Endothelial cell of umbilical vein (primary cell): ENCODE measurements at regions of chr1 and their contacts with region 1.

Region 1: DNA sequence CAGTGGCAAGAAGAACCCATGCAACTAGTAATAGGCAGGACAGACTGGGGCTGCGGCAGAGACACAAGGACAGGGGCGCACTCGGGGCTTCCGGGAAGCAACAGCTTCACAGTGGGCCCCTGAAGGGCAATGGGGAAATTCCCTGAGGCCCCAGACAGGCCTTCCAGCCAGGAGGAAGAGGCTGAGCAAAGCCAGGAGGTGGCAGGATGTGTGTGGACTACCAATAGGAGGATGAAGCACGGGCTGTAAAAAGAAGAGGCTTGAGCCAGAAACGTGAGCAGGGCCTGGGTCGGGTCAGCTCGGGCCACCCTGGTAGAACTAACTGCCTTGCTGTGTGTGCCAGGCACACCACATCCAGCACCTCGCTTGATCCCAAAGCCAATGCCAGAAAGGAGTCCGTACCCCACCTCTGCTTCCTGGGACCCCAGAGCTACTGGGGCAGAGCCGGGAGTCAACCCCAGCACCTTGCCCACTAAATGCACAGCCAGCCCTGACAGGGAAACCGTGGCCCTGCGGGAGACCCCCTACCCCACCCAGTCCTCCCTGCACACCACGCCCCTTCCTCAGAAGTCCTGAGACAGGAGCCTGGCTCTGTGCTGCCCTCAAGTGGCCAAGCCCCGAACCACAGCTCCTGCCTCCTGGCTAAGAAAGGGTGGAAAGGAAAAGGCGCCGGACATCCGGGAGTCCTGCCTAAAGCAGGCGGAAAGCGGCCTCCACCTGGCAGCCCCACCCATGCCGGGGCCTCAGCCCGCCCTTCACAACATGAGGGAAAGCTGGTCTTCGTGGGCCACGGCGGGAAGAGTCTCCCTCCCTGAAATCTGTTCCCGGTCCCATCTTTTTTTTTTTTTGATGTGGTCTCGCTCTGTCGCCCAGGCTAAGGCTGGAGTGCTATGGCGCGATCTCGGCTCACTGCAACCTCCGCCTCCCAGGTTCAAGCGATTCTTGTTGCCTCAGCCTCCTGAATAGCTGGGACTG is 33.7 kb downstream of the TTC39A start:
- DNase-seq: peak; percentile 80
- H3K4me3 ChIP-seq: peak overlapping the region in 2 of 3 experiments; percentile 2 to 34
- H3K27ac ChIP-seq: peak overlapping the region; percentile 39
- H3K4me1 ChIP-seq: peaks cover 9% of the 10 kb centered on the region
- H3K27me3 ChIP-seq: no peaks in the 10 kb centered on the region
- CTCF ChIP-seq: peak; percentile 93 to 96
- POLR2A ChIP-seq: peak; percentile 32

Region 2: DNA sequence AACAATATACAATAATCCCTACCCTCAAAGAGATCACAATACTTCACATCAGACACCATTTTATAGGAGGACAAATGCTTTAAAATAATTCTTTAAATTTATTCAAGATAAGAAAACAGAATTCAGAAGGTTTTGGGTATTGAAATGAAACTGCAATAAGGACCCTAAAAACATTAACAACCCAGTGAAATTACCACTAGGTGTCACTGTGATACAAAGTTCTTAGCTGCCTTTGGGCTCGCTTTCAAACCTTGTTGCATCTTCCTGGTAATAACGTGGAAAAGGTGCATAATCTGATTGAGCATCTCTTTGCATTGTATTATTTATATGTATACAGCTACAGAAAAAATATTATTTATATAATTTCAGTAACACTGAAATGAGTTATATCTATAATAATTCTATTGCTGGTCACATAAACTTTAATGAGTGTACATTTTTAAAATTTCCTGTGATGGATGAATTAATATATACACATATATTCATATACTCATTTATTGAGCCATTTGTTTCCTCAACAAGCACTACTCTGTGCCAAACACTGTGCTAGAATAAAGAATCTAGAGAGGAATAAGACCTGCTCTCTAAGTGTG is 521.8 kb before region 1 on chr1:
- CTCF ChIA-PET with region 1: interaction called, 11 read pairs
- POLR2A ChIA-PET with region 1: no interaction called
- dilution Hi-C with region 1: no loop called
- intact Hi-C with region 1: loop called (anchors 10 kb)
- DNase-seq: peak; percentile 67
- H3K4me3 ChIP-seq: no peak overlapping the region
- H3K27ac ChIP-seq: no peak overlapping the region
- H3K4me1 ChIP-seq: no peaks in the 10 kb centered on the region
- H3K27me3 ChIP-seq: no peaks in the 10 kb centered on the region
- CTCF ChIP-seq: peak; percentile 38 to 50
- POLR2A ChIP-seq: no peak

Region 3: DNA sequence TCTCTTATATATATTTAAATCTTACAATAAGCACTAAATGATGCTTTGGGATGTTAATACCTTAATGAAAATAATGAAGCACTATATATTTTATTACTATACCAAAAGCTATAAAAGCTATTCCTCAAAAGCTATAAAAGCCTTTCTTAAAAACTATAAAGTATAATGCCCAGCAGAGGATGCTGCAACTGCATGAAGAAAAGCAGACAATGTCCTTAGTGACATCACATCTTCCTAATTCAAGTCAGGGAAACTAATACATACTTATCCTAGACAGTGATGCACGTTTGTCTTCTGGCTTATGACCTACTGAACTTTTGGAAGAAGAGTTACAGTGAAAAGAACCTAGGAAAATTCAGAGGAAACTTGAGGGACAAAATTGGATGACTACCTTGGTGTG is 208.2 kb before region 1 on chr1:
- CTCF ChIA-PET with region 1: no interaction called
- POLR2A ChIA-PET with region 1: no interaction called
- dilution Hi-C with region 1: no loop called
- intact Hi-C with region 1: loop called (anchors 10 kb)
- DNase-seq: peak; percentile 7
- H3K4me3 ChIP-seq: no peak overlapping the region
- H3K27ac ChIP-seq: no peak overlapping the region
- H3K4me1 ChIP-seq: no peaks in the 10 kb centered on the region
- H3K27me3 ChIP-seq: peaks cover 14 to 15% of the 10 kb centered on the region in 2 experiments
- CTCF ChIP-seq: no peak
- POLR2A ChIP-seq: no peak

Region 4: GRCh38 chr1:51115714-51116404 is 180.8 kb before region 1 on chr1:
- CTCF ChIA-PET with region 1: no interaction called
- POLR2A ChIA-PET with region 1: no interaction called
- dilution Hi-C with region 1: no loop called
- intact Hi-C with region 1: no loop called
- DNase-seq: no peak
- H3K4me3 ChIP-seq: no peak overlapping the region
- H3K27ac ChIP-seq: no peak overlapping the region
- H3K4me1 ChIP-seq: no peaks in the 10 kb centered on the region
- H3K27me3 ChIP-seq: peaks cover 1 to 21% of the 10 kb centered on the region in 2 experiments
- CTCF ChIP-seq: no peak
- POLR2A ChIP-seq: no peak

Region 5: GRCh38 chr1:51253691-51254090 is 43.0 kb before region 1 on chr1:
- CTCF ChIA-PET with region 1: no interaction called
- POLR2A ChIA-PET with region 1: no interaction called
- dilution Hi-C with region 1: no loop called
- intact Hi-C with region 1: no loop called
- DNase-seq: no peak
- H3K4me3 ChIP-seq: no peak overlapping the region
- H3K27ac ChIP-seq: no peak overlapping the region
- H3K4me1 ChIP-seq: no peaks in the 10 kb centered on the region
- H3K27me3 ChIP-seq: no peaks in the 10 kb centered on the region
- CTCF ChIP-seq: no peak
- POLR2A ChIP-seq: no peak

Region 6: DNA sequence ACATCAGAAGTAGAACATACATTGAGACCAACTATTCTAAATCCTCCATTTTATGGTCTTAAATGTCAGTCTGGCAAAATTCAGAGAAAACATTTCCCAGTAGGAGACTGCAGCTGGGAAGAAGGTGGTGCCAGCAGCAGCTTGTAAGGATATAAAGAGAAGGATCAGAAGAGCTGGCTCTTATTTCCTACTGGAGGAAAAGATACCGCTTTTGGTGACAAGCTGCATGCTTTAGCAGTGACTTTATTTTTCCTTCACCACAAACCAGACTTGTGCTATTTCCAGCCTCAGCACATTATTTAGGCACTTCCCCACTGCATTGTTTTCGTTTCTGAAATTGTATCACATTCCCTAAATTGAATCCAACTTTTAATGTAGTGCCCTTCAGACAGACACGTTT is 32.2 kb before region 1 on chr1:
- CTCF ChIA-PET with region 1: interaction called, 5 read pairs
- POLR2A ChIA-PET with region 1: no interaction called
- dilution Hi-C with region 1: no loop called
- intact Hi-C with region 1: loop called (anchors 2 kb)
- DNase-seq: peak; percentile 84
- H3K4me3 ChIP-seq: no peak overlapping the region
- H3K27ac ChIP-seq: peak overlapping the region; percentile 61
- H3K4me1 ChIP-seq: peaks cover 53% of the 10 kb centered on the region
- H3K27me3 ChIP-seq: no peaks in the 10 kb centered on the region
- CTCF ChIP-seq: no peak
- POLR2A ChIP-seq: no peak

Region 7: GRCh38 chr1:51341876-51342496 is 45.3 kb after region 1 on chr1:
- CTCF ChIA-PET with region 1: no interaction called
- POLR2A ChIA-PET with region 1: no interaction called
- dilution Hi-C with region 1: no loop called
- intact Hi-C with region 1: no loop called
- DNase-seq: no peak
- H3K4me3 ChIP-seq: no peak overlapping the region
- H3K27ac ChIP-seq: no peak overlapping the region
- H3K4me1 ChIP-seq: no peaks in the 10 kb centered on the region
- H3K27me3 ChIP-seq: peaks cover 17 to 19% of the 10 kb centered on the region in 2 experiments
- CTCF ChIP-seq: no peak
- POLR2A ChIP-seq: no peak

Region 8: DNA sequence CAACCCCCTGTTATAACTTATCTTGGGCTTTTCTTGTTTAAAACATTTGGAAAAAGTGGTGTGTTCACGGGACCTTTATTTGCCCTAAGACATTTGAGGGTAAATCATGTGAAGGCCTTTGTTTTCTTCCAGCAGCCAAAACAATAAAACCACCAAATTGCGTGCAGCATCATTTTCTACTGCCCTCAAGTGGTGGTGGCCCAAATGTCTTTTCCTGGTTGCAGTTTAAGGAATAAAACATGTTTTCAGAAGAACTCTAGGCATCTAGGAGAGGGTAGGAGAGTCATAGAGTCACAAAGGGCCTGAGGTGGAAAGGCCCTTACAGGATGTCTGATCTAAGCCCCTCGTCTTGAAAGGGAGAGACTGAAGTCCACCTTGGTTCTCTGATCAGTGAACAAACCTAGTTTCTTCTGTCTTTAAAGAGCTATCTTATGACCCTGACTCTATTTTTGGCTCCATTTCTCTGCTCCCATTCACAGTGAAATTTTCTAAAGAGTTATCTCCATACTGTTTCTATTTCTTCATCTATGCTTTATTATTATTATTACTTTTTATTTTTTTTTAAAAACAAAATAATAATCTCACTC is 238.4 kb after region 1 on chr1:
- CTCF ChIA-PET with region 1: interaction called, 10 read pairs
- POLR2A ChIA-PET with region 1: no interaction called
- dilution Hi-C with region 1: no loop called
- intact Hi-C with region 1: loop called (anchors 2 kb)
- DNase-seq: peak; percentile 89
- H3K4me3 ChIP-seq: no peak overlapping the region
- H3K27ac ChIP-seq: no peak overlapping the region
- H3K4me1 ChIP-seq: peaks cover 10% of the 10 kb centered on the region
- H3K27me3 ChIP-seq: no peaks in the 10 kb centered on the region
- CTCF ChIP-seq: peak; percentile 65 to 83
- POLR2A ChIP-seq: no peak